ENCODE measurements at regions of chr1 and their contacts with region 1.

Region 1: GRCh38 chr1:203702130-203702577 is 62.8 kb upstream of the LAX1 start:
- DNase-seq: peak; percentile 36
- ATAC-seq: peak; percentile 82
- H3K4me3 ChIP-seq: no peak overlapping the region
- H3K27ac ChIP-seq: no peak overlapping the region
- H3K4me1 ChIP-seq: no peaks in the 10 kb centered on the region
- H3K27me3 ChIP-seq: no peaks in the 10 kb centered on the region
- CTCF ChIP-seq: peak; percentile 92
- EP300 ChIP-seq: no peak
- POLR2A ChIP-seq: no peak
- RAD21 ChIP-seq: peak; percentile 82

Region 2: GRCh38 chr1:203504397-203505250 is 197.5 kb before region 1 on chr1:
- CTCF ChIA-PET with region 1: interaction called, 42 read pairs
- POLR2A ChIA-PET with region 1: no interaction called
- in situ Hi-C with region 1: loop called (anchors 5 kb)
- intact Hi-C with region 1: loop called (anchors 1 kb)
- DNase-seq: peak; percentile 61
- ATAC-seq: peak; percentile 83
- H3K4me3 ChIP-seq: no peak overlapping the region
- H3K27ac ChIP-seq: no peak overlapping the region
- H3K4me1 ChIP-seq: peaks cover 13% of the 10 kb centered on the region
- H3K27me3 ChIP-seq: 0 out of 5 replicates have a peak, but pooled peaks cover 0 to 2% of the 10 kb centered on the region in 2 experiments
- CTCF ChIP-seq: peak; percentile 83
- EP300 ChIP-seq: no peak
- POLR2A ChIP-seq: no peak
- RAD21 ChIP-seq: peak; percentile 58

Region 3: GRCh38 chr1:203593723-203594122 is 108.4 kb before region 1 on chr1:
- CTCF ChIA-PET with region 1: interaction called, 15 read pairs
- POLR2A ChIA-PET with region 1: no interaction called
- in situ Hi-C with region 1: no loop called
- intact Hi-C with region 1: loop called (anchors 1 kb)
- DNase-seq: no peak
- ATAC-seq: peak; percentile 84
- H3K4me3 ChIP-seq: no peak overlapping the region
- H3K27ac ChIP-seq: no peak overlapping the region
- H3K4me1 ChIP-seq: peaks cover 13% of the 10 kb centered on the region
- H3K27me3 ChIP-seq: no peaks in the 10 kb centered on the region; a peak in 1 of 5 replicates
- CTCF ChIP-seq: 0 out of 2 replicates have a peak, but pooled peaks have one; percentile 35
- EP300 ChIP-seq: no peak
- POLR2A ChIP-seq: no peak
- RAD21 ChIP-seq: peak; percentile 41; the same call in 1 of the 2 replicates

Region 4: DNA sequence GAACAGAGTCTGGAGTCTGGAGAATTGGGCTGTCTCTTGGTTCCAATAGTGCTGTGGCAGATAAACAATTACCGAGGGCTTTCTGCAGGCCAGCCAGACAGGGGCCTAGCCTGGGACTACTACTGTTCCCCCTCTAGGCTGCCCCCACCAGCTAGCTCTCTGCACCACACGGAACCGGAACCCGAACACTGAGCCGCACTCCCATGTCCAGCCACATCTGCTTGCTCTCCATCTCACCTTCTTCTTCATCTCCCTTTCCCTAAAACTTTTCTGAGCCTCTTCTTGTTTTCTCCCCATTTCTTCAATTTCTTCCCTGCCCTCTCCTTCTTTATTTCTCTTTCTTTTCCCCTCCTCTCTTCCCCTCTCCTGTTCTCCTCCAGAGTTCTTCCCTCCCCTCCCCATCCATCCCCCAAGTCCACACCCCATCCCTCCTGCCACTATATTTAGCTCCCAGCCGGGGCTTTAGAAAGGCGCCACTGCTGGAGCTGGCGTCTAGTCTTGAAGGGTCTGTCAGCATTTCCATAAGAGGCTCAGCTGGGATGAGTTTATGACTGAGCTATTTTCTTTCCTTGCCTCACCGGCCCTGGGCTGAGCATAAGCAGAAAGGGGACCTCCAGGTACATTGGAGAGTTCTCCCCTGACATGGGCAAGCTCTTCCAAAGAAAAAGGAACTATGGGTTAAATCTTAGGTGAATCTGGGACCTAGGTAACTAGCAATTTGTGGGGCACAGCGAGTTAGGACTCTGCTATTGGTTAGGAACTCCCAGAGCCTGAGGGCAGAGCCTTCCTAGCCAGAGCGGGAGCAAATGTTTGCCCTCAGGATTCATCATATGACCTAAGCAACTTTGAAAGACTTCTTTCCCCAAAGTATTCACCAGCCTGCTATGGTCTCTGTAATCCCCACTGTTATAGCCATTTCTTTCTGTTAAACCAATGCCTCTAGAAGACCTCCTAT is 101.1 kb before region 1 on chr1:
- CTCF ChIA-PET with region 1: no interaction called
- POLR2A ChIA-PET with region 1: no interaction called
- in situ Hi-C with region 1: loop called (anchors 5 kb)
- intact Hi-C with region 1: no loop called
- DNase-seq: no peak
- ATAC-seq: no peak
- H3K4me3 ChIP-seq: no peak overlapping the region
- H3K27ac ChIP-seq: no peak overlapping the region
- H3K4me1 ChIP-seq: no peaks in the 10 kb centered on the region
- H3K27me3 ChIP-seq: no peaks in the 10 kb centered on the region; a peak in 1 of 5 replicates
- CTCF ChIP-seq: no peak
- EP300 ChIP-seq: no peak
- POLR2A ChIP-seq: no peak
- RAD21 ChIP-seq: no peak

Region 5: GRCh38 chr1:203638950-203639349 is 63.2 kb before region 1 on chr1:
- CTCF ChIA-PET with region 1: no interaction called
- POLR2A ChIA-PET with region 1: no interaction called
- in situ Hi-C with region 1: no loop called
- intact Hi-C with region 1: no loop called
- DNase-seq: no peak
- ATAC-seq: no peak
- H3K4me3 ChIP-seq: no peak overlapping the region
- H3K27ac ChIP-seq: no peak overlapping the region
- H3K4me1 ChIP-seq: no peaks in the 10 kb centered on the region
- H3K27me3 ChIP-seq: no peaks in the 10 kb centered on the region; a peak in 1 of 5 replicates
- CTCF ChIP-seq: no peak
- EP300 ChIP-seq: no peak
- POLR2A ChIP-seq: no peak
- RAD21 ChIP-seq: no peak

Measured in HepG2 (cell line).